Right ventricle myocardium superior (tissue), 1 donor: ENCODE measurements at regions of chr10 and their contacts with region 1.

Region 1: GRCh38 chr10:97869091-97870042 is 19.7 kb downstream of the GOLGA7B start:
- DNase-seq: peak; percentile 85
- ATAC-seq: peak; percentile 98

Region 2: GRCh38 chr10:97327348-97328294 is 541.7 kb before region 1 on chr10:
- intact Hi-C with region 1: no loop called
- DNase-seq: no peak
- ATAC-seq: no peak

Region 3: DNA sequence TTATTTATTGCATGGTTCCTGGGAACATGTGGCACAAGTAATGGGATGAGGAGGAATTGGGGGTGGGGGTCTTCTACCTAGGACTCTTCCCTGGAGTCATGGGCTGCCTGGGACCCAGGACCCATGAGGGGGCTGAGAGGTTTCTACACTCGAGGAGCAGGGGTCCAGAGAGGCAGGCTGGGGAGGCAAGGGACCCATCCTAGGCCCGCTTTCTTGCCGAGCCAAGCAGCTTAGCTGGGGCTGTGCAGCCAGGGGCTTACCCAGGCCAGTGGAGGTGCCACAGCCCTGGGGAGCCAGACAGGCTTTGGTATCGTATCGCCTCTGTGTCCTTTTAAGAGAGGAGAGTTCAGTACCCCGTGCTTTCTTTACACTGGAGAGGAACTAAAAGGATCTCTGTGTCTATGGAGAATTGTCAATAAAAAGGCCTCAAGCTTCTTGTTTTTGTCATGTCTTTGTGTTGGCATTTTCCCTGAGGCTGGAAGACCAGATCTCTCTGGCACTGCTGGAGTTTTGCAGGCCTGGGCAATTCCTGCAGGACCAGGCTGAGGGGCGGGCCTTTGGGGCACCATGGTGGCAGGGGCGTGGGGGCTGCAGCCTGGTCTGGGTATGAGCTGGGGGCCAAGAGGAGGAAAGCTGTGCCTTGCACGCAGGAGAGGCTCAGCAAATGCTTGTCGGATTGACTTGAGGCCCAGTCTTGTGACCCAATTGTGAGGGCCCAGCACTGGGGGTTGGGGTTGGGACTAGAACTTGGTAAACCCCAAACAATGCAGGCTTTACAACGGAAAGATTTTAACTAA is 108.7 kb before region 1 on chr10:
- intact Hi-C with region 1: loop called (anchors 2 kb)
- DNase-seq: no peak
- ATAC-seq: no peak

Region 4: GRCh38 chr10:97792141-97792721 is 77.1 kb before region 1 on chr10:
- intact Hi-C with region 1: loop called (anchors 5 kb)
- DNase-seq: peak; percentile 76
- ATAC-seq: peak; percentile 77

Region 5: GRCh38 chr10:98028168-98028770 is 158.9 kb after region 1 on chr10:
- intact Hi-C with region 1: no loop called
- DNase-seq: peak; percentile 57
- ATAC-seq: peak; percentile 50

Region 6: GRCh38 chr10:99013885-99014284 is 1144.5 kb after region 1 on chr10:
- intact Hi-C with region 1: no loop called
- DNase-seq: no peak
- ATAC-seq: no peak